ENCODE measurements at regions of chr15 and their contacts with region 1.

Region 1: DNA sequence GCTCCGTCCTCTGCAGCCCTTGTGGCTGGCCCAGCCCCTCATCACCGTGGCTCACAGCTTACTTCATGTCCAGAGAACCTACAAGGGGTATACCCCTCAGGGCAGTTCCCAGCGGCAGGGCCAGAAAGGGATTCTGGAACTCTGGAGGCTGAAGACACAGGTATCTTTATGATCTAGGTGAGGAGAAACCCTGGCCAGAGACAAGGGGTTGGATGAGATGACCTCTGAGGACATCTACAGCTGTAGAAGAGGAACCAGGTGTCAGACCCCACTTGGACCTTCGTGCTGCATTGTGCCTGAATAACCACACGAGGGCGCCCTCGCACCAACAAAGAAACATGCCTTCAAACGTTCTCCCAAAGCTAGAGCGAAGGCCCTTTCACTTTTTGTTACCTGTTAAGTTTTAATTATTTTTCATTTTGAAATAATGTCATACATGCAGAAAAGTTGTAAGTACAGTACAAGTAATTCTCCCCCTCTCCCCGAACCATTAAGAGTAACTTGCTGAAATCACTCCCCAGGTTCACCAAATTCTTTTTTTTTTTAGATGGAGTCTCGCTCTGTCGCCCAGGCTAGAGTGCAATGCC is 118.7 kb upstream of the SMAD3 start:
- DNase-seq: peak; percentile 56 to 89 (median 74)
- ATAC-seq: peak; percentile 82
- H3K4me3 ChIP-seq: no peak overlapping the region
- H3K4me3 Mint-ChIP-seq: no peak overlapping the region
- H3K27ac ChIP-seq: no peak overlapping the region
- H3K27ac Mint-ChIP-seq: no peak overlapping the region
- H3K4me1 ChIP-seq: no peaks in the 10 kb centered on the region
- H3K4me1 Mint-ChIP-seq: peaks cover 3% of the 10 kb centered on the region
- H3K27me3 ChIP-seq: peaks cover 0 to 2% of the 10 kb centered on the region in 2 experiments
- H3K27me3 Mint-ChIP-seq: no peaks in the 10 kb centered on the region
- CTCF ChIP-seq: peak; percentile 97

Region 2: DNA sequence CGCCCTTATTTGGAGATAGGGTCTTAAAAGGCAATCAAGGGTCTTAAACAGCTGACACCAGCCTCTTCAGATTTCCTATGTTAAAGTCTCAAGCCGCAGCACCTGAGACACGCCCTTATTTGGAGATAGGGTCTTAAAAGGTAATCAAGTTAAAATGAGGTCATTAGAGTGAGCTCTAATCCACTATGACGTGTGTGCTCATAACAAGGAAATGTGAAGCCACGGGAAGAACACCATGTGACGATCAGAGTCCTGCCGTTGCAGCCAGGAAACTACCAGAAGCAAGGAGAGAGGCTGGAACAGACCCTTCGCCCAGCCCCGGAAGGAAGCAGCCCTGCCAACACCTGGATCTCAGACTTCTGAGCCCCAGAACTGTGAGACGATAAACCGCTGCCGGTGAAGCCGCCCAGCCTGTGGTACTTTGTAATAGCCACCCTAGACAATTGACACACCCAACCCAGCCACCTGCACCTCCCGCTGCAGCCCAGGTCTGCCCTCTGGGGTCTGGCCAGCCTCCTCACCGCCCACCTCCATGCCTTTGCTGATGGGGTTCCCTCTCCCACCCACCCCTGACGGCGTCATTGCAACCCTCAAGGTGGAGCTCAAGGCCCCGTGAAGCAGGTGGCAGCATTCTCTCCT is 831.0 kb before region 1 on chr15:
- CTCF ChIA-PET with region 1: no interaction called
- POLR2A ChIA-PET with region 1: no interaction called
- intact Hi-C with region 1: no loop called
- DNase-seq: peak in 7 of 9 experiments; percentile 3 to 85 (median 58)
- ATAC-seq: peak; percentile 89
- H3K4me3 ChIP-seq: no peak overlapping the region
- H3K4me3 Mint-ChIP-seq: peak overlapping the region; percentile 21
- H3K27ac ChIP-seq: peak overlapping the region in 1 of 2 experiments; percentile 59
- H3K27ac Mint-ChIP-seq: peak overlapping the region; percentile 74
- H3K4me1 ChIP-seq: peaks cover 19% of the 10 kb centered on the region
- H3K4me1 Mint-ChIP-seq: peaks cover 8% of the 10 kb centered on the region
- H3K27me3 ChIP-seq: no peaks in the 10 kb centered on the region
- H3K27me3 Mint-ChIP-seq: no peaks in the 10 kb centered on the region
- CTCF ChIP-seq: no peak

Region 3: DNA sequence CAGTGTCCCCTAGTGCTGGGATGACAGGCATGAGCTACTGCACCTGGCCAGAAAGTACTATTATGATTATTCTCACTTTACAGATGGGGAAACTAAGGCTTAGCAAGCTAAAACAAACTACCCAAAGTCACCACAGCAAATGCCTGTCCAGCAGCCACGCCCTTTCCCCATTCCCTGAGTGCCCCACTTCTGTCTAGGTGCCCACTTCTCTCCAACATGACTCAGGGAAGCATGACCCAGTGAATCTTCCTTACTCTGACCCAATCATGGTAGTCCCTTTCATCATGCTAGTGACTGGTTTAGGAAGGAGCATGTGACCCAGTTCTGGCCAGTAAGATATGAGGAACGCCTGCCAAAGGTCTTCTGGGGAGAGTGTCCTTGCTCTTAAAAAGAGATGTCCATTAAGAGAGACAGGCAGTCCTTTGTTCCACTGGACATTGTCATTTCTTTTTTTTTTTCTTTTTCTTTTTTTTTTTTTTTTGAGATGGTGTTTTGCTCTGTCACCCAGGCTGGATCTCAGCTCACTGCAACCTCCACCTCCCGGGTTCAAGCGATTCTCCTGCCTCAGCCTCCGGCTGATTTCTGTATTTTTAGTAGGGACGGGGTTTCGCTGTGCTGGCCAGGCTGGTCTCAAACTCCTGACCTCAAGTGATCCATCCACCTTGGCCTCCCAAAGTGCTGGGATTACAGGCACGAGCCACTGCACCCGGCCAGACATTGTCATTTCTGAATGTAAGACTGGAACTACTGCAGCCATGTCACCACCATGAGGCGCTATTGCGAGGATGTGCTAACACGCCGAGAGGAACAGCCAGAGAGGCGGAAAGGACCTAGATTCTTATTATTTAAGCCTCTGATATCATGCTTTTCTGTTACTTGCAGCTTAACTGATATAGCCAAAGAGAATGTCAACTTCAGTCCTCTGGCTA is 712.9 kb before region 1 on chr15:
- CTCF ChIA-PET with region 1: no interaction called
- POLR2A ChIA-PET with region 1: no interaction called
- intact Hi-C with region 1: no loop called
- DNase-seq: no peak
- ATAC-seq: no peak
- H3K4me3 ChIP-seq: no peak overlapping the region
- H3K4me3 Mint-ChIP-seq: no peak overlapping the region
- H3K27ac ChIP-seq: no peak overlapping the region
- H3K27ac Mint-ChIP-seq: no peak overlapping the region
- H3K4me1 ChIP-seq: no peaks in the 10 kb centered on the region
- H3K4me1 Mint-ChIP-seq: no peaks in the 10 kb centered on the region
- H3K27me3 ChIP-seq: no peaks in the 10 kb centered on the region
- H3K27me3 Mint-ChIP-seq: peaks cover 15% of the 10 kb centered on the region
- CTCF ChIP-seq: no peak

Region 4: GRCh38 chr15:67181191-67181645 is 234.5 kb after region 1 on chr15:
- CTCF ChIA-PET with region 1: interaction called, 8 read pairs
- POLR2A ChIA-PET with region 1: no interaction called
- intact Hi-C with region 1: loop called (anchors 2 kb)
- DNase-seq: peak in 3 of 9 experiments; percentile 14 to 42 (median 33)
- ATAC-seq: no peak
- H3K4me3 ChIP-seq: no peak overlapping the region
- H3K4me3 Mint-ChIP-seq: no peak overlapping the region
- H3K27ac ChIP-seq: no peak overlapping the region
- H3K27ac Mint-ChIP-seq: no peak overlapping the region
- H3K4me1 ChIP-seq: no peaks in the 10 kb centered on the region
- H3K4me1 Mint-ChIP-seq: peaks cover 5% of the 10 kb centered on the region
- H3K27me3 ChIP-seq: no peaks in the 10 kb centered on the region
- H3K27me3 Mint-ChIP-seq: no peaks in the 10 kb centered on the region
- CTCF ChIP-seq: no peak

Region 5: GRCh38 chr15:67303490-67304363 is 357.1 kb after region 1 on chr15:
- CTCF ChIA-PET with region 1: interaction called, 111 read pairs
- POLR2A ChIA-PET with region 1: interaction called, 11 read pairs
- intact Hi-C with region 1: loop called (anchors 1 kb)
- DNase-seq: peak in 4 of 9 experiments; percentile 16 to 69 (median 42)
- ATAC-seq: peak; percentile 51
- H3K4me3 ChIP-seq: no peak overlapping the region
- H3K4me3 Mint-ChIP-seq: no peak overlapping the region
- H3K27ac ChIP-seq: no peak overlapping the region
- H3K27ac Mint-ChIP-seq: no peak overlapping the region
- H3K4me1 ChIP-seq: no peaks in the 10 kb centered on the region
- H3K4me1 Mint-ChIP-seq: no peaks in the 10 kb centered on the region
- H3K27me3 ChIP-seq: no peaks in the 10 kb centered on the region
- H3K27me3 Mint-ChIP-seq: peaks cover 2% of the 10 kb centered on the region
- CTCF ChIP-seq: peak; percentile 71

Region 6: GRCh38 chr15:67433495-67434099 is 486.9 kb after region 1 on chr15:
- CTCF ChIA-PET with region 1: interaction called, 47 read pairs
- POLR2A ChIA-PET with region 1: no interaction called
- intact Hi-C with region 1: loop called in 1 of 2 experiments (anchors 2 kb)
- DNase-seq: peak in 3 of 9 experiments; percentile 9 to 33 (median 20)
- ATAC-seq: no peak
- H3K4me3 ChIP-seq: no peak overlapping the region
- H3K4me3 Mint-ChIP-seq: no peak overlapping the region
- H3K27ac ChIP-seq: no peak overlapping the region
- H3K27ac Mint-ChIP-seq: no peak overlapping the region
- H3K4me1 ChIP-seq: no peaks in the 10 kb centered on the region
- H3K4me1 Mint-ChIP-seq: no peaks in the 10 kb centered on the region
- H3K27me3 ChIP-seq: no peaks in the 10 kb centered on the region
- H3K27me3 Mint-ChIP-seq: no peaks in the 10 kb centered on the region
- CTCF ChIP-seq: peak; percentile 49